Activated naive CD4-positive, alpha-beta T cell treated with anti-CD3 and anti-CD28 coated beads, Interleukin-2, amount 10 ng/mL, durations not matched to agents 7 days and 5 days (primary cell): ENCODE measurements at regions of chr17 and their contacts with region 1.

Region 1: GRCh38 chr17:32461853-32462617 is 17.7 kb downstream of the PSMD11 start:
- DNase-seq: peak; percentile 79
- H3K4me3 Mint-ChIP-seq: no peak overlapping the region
- H3K27ac Mint-ChIP-seq: peak overlapping the region; percentile 7
- H3K4me1 Mint-ChIP-seq: peaks cover 28% of the 10 kb centered on the region
- H3K27me3 Mint-ChIP-seq: no peaks in the 10 kb centered on the region

Region 2: GRCh38 chr17:32253117-32253611 is 208.9 kb before region 1 on chr17:
- CTCF ChIA-PET with region 1: interaction called, 10 read pairs
- DNase-seq: peak; percentile 88
- H3K4me3 Mint-ChIP-seq: no peak overlapping the region
- H3K27ac Mint-ChIP-seq: no peak overlapping the region
- H3K4me1 Mint-ChIP-seq: no peaks in the 10 kb centered on the region
- H3K27me3 Mint-ChIP-seq: peaks cover 48% of the 10 kb centered on the region

Region 3: DNA sequence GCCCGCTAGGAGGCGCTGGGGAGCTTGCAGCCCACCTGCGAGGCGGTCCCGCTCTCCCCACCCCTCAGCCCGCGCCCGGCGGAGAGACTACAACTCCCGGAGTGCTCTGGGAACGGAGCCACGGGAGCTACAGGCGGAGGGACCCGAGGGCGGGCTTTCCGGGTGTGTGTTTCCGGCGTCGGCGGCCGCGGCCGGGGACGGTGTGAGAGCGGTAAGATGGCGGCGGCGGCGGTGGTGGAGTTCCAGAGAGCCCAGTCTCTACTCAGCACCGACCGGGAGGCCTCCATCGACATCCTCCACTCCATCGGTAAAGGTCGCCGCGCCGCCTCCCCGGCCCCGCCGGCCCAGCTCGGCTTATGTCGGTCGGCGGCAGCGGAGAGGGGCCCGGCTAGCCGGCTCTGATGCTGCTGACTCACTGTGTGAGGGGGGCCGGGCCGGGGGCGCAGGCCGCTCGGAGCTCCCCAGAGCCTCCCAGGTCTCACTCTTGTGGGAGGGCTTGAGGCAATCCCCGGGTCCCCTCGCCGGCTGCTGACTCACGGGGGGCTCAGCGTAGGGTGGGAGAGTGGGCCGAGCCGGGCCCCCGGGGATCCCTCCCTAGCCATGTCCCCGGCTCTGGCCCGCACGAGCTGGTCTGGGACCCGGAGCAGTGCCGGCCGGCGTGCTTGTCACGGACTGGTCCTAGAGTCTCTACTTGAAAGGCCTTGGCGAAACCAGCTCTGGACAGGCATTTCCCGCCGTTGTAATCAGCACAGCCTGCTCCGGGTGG is 17.5 kb before region 1 on chr17 and contains the start of gene PSMD11:
- CTCF ChIA-PET with region 1: interaction called, 34 read pairs
- DNase-seq: peak; percentile 99
- H3K4me3 Mint-ChIP-seq: peak within 1 kb of the TSS; percentile 88
- H3K27ac Mint-ChIP-seq: peak within 1 kb of the TSS; percentile 86
- H3K4me1 Mint-ChIP-seq: peaks cover 42% of the 10 kb centered on the region
- H3K27me3 Mint-ChIP-seq: peaks cover 36% of the 10 kb centered on the region

Region 4: GRCh38 chr17:32523017-32523680 is 61.1 kb after region 1 on chr17:
- CTCF ChIA-PET with region 1: interaction called, 10 read pairs
- DNase-seq: peak; percentile 50
- H3K4me3 Mint-ChIP-seq: peak overlapping the region; percentile 5
- H3K27ac Mint-ChIP-seq: peak overlapping the region; percentile 89
- H3K4me1 Mint-ChIP-seq: peaks cover 71% of the 10 kb centered on the region
- H3K27me3 Mint-ChIP-seq: peaks cover 25% of the 10 kb centered on the region

Region 5: DNA sequence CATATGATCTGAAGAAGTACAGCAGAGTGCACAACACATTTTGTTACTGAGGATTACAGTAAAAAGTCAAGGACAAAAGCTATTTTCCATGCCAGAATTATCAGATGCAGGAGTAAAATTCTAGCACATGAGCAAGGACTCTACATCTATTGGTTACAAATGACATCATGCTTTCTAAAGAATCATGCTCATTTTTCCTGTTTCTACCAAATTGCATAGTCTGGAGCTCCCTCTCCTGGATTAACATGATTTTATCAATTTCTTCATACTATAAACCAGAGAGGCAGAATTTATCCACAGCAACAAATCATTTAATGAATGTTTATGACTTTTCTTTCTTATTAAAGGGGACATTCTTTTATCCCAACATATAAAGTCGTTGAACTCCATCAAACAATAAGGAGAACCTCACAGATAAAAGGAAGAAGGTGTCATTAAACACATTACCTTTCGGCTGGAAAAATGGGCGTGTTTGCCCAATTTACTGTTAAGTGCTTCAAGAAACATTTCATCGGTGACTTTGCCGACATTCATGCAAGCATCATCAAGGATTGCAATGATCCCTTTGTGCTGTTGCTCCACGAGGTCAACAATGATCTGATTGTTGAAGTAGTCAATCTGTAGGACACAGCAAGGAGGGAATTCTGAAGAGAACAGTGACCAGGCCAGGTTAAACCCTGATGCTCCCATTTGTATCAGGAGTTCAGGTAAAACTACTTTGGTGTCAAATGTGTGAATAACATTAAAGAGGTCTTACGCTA is 293.2 kb after region 1 on chr17:
- CTCF ChIA-PET with region 1: interaction called, 21 read pairs
- DNase-seq: no peak
- H3K4me3 Mint-ChIP-seq: no peak overlapping the region
- H3K27ac Mint-ChIP-seq: no peak overlapping the region
- H3K4me1 Mint-ChIP-seq: peaks cover 6% of the 10 kb centered on the region
- H3K27me3 Mint-ChIP-seq: no peaks in the 10 kb centered on the region